ENCODE measurements at regions of chr10 and their contacts with region 1.

Region 1: DNA sequence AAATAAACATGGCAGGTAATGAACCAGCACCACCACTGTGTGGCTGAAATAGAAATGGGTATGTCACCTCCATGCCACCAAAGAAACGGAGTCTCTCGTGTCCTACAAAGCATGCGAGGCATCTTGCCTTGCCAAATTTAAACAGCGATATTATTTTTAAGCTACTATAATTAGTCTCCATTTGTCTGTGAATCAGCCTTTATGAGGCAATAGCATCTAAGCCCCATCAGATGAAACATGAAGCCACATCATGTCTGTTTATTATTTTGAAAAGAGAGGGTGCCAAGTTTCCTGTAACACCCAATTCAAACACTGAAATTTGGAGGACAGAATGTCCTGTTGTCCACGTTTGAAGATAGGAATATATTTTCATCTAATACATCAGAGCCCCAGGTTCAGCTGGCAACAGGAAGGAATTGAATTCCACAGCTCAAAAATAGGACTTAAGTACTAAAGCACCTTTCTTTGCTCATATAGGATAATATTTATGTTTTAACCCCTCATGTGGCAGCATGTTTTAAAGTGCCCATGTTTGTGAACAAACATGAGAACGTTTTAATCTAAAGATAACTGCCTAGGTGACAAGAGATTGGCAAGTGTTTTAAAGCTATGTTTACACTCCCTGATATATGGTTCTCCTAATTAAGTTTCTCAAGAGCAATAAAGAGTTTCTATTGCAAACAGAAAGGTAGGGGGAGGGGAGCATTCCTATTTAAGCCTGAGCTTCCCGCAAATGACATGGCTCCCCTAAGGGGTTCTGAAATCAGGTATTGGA is 86.8 kb downstream of the SORBS1 start:
- DNase-seq: no peak
- ATAC-seq: peak; percentile 70
- H3K4me3 ChIP-seq: no peak overlapping the region
- H3K27ac ChIP-seq: peak overlapping the region; percentile 99 to 100
- H3K4me1 ChIP-seq: peaks cover 13 to 20% of the 10 kb centered on the region in 2 donors
- H3K27me3 ChIP-seq: no peaks in the 10 kb centered on the region

Region 2: DNA sequence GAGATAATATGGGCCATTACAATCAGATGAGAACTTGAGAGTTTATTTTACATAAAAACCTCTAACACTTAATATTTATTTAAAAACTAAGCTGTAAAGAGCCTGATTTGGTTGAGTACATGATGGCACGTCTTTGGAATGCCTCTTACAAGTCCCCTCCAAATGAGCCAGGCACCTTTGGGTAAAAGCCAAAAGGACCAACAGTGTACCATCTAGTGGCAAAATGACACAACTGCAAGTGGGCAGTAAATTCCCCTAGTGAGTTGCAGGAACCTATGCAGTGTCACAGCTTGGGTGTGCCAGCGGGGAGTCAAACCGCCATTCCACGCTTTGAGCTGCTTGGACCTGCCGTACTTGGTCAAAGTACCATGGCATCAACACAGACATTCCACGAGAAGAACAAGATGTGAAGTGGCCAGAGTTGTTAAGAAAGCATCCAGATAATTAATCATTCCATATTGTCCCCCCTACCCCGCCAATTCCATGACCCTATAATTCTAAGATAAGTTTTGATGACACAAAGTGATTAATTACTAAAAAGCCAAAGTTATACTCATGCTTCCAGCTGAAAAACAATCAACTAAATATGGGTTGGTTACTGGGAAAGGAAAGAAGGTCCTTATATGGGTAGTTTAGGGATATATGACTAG is 28.5 kb before region 1 on chr10:
- intact Hi-C with region 1: loop called in 1 of 2 experiments (anchors 2 kb)
- DNase-seq: peak; percentile 79 to 85
- ATAC-seq: peak; percentile 87
- H3K4me3 ChIP-seq: no peak overlapping the region
- H3K27ac ChIP-seq: peak overlapping the region; percentile 98 to 99
- H3K4me1 ChIP-seq: peaks cover 10 to 14% of the 10 kb centered on the region in 2 donors
- H3K27me3 ChIP-seq: no peaks in the 10 kb centered on the region

Region 3: GRCh38 chr10:95513941-95514392 is 39.6 kb after region 1 on chr10:
- intact Hi-C with region 1: loop called in 1 of 2 experiments (anchors 5 kb)
- DNase-seq: peak in 1 of 2 donors; percentile 73
- ATAC-seq: peak; percentile 80
- H3K4me3 ChIP-seq: no peak overlapping the region
- H3K27ac ChIP-seq: peak overlapping the region; percentile 77 to 85
- H3K4me1 ChIP-seq: peaks cover 7 to 10% of the 10 kb centered on the region in 2 donors
- H3K27me3 ChIP-seq: no peaks in the 10 kb centered on the region

Region 4: GRCh38 chr10:95860166-95860940 is 385.9 kb after region 1 on chr10:
- intact Hi-C with region 1: no loop called
- DNase-seq: no peak
- ATAC-seq: no peak
- H3K4me3 ChIP-seq: no peak overlapping the region
- H3K27ac ChIP-seq: no peak overlapping the region
- H3K4me1 ChIP-seq: no peaks in the 10 kb centered on the region
- H3K27me3 ChIP-seq: no peaks in the 10 kb centered on the region

Measured in aorta (tissue), 5 donors.